ENCODE measurements at regions of chr1 and their contacts with region 1.

Region 1: GRCh38 chr1:112803906-112804762 is 89.0 kb upstream of the PPM1J start:
- DNase-seq: peak; percentile 79
- H3K4me3 ChIP-seq: no peak overlapping the region; a peak in 1 of 4 replicates
- H3K27ac ChIP-seq: no peak overlapping the region
- H3K4me1 ChIP-seq: no peaks in the 10 kb centered on the region
- H3K27me3 ChIP-seq: no peaks in the 10 kb centered on the region
- CTCF ChIP-seq: peak; percentile 86
- EP300 ChIP-seq: no peak
- RAD21 ChIP-seq: peak; percentile 99

Region 2: GRCh38 chr1:112706908-112707663 is 97.0 kb before region 1 on chr1 and contains the start of gene RHOC:
- CTCF ChIA-PET with region 1: interaction called, 32 read pairs
- POLR2A ChIA-PET with region 1: no interaction called
- DNase-seq: peak; percentile 96
- H3K4me3 ChIP-seq: peak within 1 kb of the TSS; percentile 93 to 94
- H3K27ac ChIP-seq: peak within 1 kb of the TSS; percentile 77 to 87
- H3K4me1 ChIP-seq: peaks cover 10 to 37% of the 10 kb centered on the region in 2 experiments; a peak in 3 of 4 replicates
- H3K27me3 ChIP-seq: no peaks in the 10 kb centered on the region
- CTCF ChIP-seq: peak; percentile 84
- EP300 ChIP-seq: no peak
- RAD21 ChIP-seq: peak; percentile 80
- polyA plus RNA-seq, gene RHOC: 961 and 1,028 TPM in 2 replicates

Region 3: GRCh38 chr1:112727716-112728115 is 76.4 kb before region 1 on chr1:
- CTCF ChIA-PET with region 1: interaction called, 754 read pairs
- POLR2A ChIA-PET with region 1: no interaction called
- DNase-seq: no peak
- H3K4me3 ChIP-seq: no peak overlapping the region
- H3K27ac ChIP-seq: no peak overlapping the region
- H3K4me1 ChIP-seq: no peaks in the 10 kb centered on the region
- H3K27me3 ChIP-seq: no peaks in the 10 kb centered on the region
- CTCF ChIP-seq: peak; percentile 26
- EP300 ChIP-seq: no peak
- RAD21 ChIP-seq: peak; percentile 8; the same call in 1 of the 2 replicates

Region 4: GRCh38 chr1:112735752-112736151 is 68.4 kb before region 1 on chr1:
- CTCF ChIA-PET with region 1: interaction called, 18 read pairs
- POLR2A ChIA-PET with region 1: no interaction called
- DNase-seq: no peak
- H3K4me3 ChIP-seq: no peak overlapping the region
- H3K27ac ChIP-seq: peak overlapping the region in 1 of 2 experiments; percentile 70; a peak in 2 of 4 replicates
- H3K4me1 ChIP-seq: no peaks in the 10 kb centered on the region
- H3K27me3 ChIP-seq: no peaks in the 10 kb centered on the region
- CTCF ChIP-seq: no peak
- EP300 ChIP-seq: peak in 1 of 2 experiments; percentile 80; a peak in 2 of 4 replicates
- RAD21 ChIP-seq: no peak

Region 5: GRCh38 chr1:112744009-112744578 is 60.0 kb before region 1 on chr1:
- CTCF ChIA-PET with region 1: interaction called, 19 read pairs
- POLR2A ChIA-PET with region 1: interaction called, 3 read pairs
- DNase-seq: no peak
- H3K4me3 ChIP-seq: no peak overlapping the region
- H3K27ac ChIP-seq: no peak overlapping the region
- H3K4me1 ChIP-seq: no peaks in the 10 kb centered on the region
- H3K27me3 ChIP-seq: no peaks in the 10 kb centered on the region; the same call in 1 of the 2 replicates
- CTCF ChIP-seq: no peak
- EP300 ChIP-seq: no peak
- RAD21 ChIP-seq: no peak

Region 6: DNA sequence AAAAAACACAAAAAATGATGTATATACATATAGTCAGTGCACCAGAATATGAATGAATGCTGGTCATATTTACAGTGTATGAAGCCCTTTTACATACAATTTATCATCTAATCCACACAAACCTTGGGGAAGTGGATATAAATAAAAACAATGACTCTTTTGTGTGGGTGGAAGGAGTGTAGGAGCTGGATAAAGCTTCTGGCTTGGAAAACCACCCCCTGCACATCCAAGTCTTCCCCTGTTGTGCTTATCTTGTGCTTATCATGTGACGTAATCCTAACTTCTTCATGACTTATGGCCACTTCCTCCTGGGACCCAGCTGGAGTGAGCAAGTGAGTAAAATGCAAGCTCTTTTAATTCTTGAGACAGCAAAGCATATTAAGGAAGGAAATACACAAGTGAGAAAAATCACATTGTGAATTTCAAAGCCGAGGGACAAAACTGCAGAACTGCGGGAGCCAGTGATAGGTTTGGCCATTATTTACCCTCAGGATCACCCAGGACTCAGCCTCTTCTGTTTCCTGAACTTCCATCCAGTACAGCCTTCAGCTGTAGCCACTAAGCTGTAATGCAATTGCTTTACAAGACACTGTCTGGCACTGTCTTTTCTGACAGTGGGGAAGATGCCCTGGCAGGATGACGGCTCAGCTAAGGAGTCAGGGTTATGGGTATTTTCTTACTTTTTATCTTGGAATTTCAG is 15.0 kb after region 1 on chr1:
- CTCF ChIA-PET with region 1: interaction called, 14 read pairs
- POLR2A ChIA-PET with region 1: no interaction called
- DNase-seq: no peak
- H3K4me3 ChIP-seq: no peak overlapping the region
- H3K27ac ChIP-seq: peak overlapping the region in 1 of 2 experiments; percentile 25; a peak in 1 of 4 replicates
- H3K4me1 ChIP-seq: no peaks in the 10 kb centered on the region
- H3K27me3 ChIP-seq: no peaks in the 10 kb centered on the region
- CTCF ChIP-seq: no peak
- EP300 ChIP-seq: no peak
- RAD21 ChIP-seq: no peak

Region 7: GRCh38 chr1:113042285-113043143 is 238.4 kb after region 1 on chr1:
- CTCF ChIA-PET with region 1: interaction called, 116 read pairs
- POLR2A ChIA-PET with region 1: no interaction called
- DNase-seq: peak; percentile 79
- H3K4me3 ChIP-seq: peak overlapping the region in 1 of 2 experiments; percentile 21; a peak in 1 of 4 replicates
- H3K27ac ChIP-seq: peak overlapping the region; percentile 48 to 70
- H3K4me1 ChIP-seq: peaks cover 7 to 18% of the 10 kb centered on the region in 2 experiments; a peak in 3 of 4 replicates
- H3K27me3 ChIP-seq: no peaks in the 10 kb centered on the region
- CTCF ChIP-seq: peak; percentile 70
- EP300 ChIP-seq: no peak
- RAD21 ChIP-seq: peak; percentile 96

Measured in SK-N-SH (cell line).